ENCODE measurements at regions of chr4 and their contacts with region 1.

Region 1: DNA sequence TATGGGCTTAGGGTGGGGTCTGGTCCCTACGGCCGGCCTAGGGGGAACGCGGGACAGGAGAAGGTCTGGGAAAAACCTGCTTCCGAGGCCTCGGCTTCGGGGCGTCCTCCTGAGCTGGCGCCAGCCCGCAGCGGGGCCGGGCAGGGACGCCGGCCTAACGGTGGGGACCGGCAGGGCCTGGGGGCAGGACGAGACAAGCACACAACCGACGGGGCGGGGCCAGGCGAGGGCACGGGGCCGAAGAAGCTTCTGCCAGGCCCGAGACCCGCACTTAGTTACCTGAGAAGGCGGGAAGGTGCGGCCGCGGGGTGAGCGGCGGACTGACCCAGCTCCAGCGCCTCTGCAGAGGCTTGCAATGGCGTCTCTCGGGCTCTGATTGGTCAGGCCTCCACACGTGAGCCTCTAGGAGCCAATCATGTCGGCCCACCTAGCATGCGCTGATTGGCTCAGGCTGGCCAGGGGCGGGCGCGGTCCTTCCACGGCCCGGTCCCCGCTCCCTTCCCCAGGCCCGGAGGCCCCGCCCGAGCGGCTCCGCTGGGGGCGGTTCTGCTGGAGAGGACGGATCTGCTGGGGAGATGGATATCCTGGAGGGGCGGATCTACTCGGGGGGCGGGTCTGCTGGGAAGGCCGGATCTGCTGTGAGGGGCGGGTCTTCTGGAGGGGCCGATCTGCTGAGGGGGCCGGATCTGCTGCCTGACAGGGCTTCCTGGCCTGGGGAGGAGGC is 44.3 kb downstream of the CPLX1 start:
- DNase-seq: peak; percentile 97 to 99 (median 98)
- ATAC-seq: peak; percentile 92
- H3K4me3 ChIP-seq: peak overlapping the region; percentile 76 to 97
- H3K4me3 Mint-ChIP-seq: peak overlapping the region; percentile 92
- H3K27ac ChIP-seq: peak overlapping the region; percentile 94 to 95
- H3K27ac Mint-ChIP-seq: peak overlapping the region; percentile 95
- H3K4me1 ChIP-seq: peaks cover 46% of the 10 kb centered on the region
- H3K4me1 Mint-ChIP-seq: peaks cover 52% of the 10 kb centered on the region
- H3K27me3 ChIP-seq: peaks cover 0 to 17% of the 10 kb centered on the region in 2 experiments
- H3K27me3 Mint-ChIP-seq: peaks cover 21% of the 10 kb centered on the region
- CTCF ChIP-seq: no peak

Region 2: DNA sequence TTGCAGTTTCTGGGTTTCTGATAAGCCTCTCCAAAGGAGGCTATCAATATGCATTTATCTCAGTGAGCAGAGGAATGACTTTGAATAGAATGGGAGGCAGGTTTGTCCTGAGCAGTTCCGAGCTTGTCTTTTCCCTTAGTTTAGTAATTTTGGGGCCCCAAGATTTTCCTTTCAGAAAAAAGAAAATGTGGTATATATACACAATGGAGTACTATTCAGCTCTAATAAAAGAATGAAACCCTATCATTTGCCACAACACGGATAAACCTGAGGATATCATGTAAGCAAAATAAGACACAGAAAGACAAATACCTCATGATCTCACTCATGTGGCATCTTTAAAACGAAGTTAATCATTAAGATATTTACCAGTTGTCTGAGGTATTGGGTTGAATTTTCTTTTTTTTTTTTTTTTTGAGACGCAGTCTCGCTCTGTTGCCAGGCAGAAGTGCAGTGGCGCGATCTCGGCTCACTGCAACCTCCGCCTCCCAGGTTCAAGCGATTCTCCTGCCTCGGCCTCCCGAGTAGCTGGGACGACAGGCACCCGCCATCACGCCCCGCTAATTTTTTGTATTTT is 283.2 kb before region 1 on chr4:
- CTCF ChIA-PET with region 1: no interaction called
- POLR2A ChIA-PET with region 1: no interaction called
- intact Hi-C with region 1: loop called in 1 of 2 experiments (anchors 1 kb)
- DNase-seq: peak in 4 of 9 experiments; percentile 0 to 48 (median 40)
- ATAC-seq: peak; percentile 54
- H3K4me3 ChIP-seq: peak overlapping the region; percentile 85 to 90
- H3K4me3 Mint-ChIP-seq: peak overlapping the region; percentile 92
- H3K27ac ChIP-seq: peak overlapping the region; percentile 92 to 93
- H3K27ac Mint-ChIP-seq: peak overlapping the region; percentile 96
- H3K4me1 ChIP-seq: peaks cover 22% of the 10 kb centered on the region
- H3K4me1 Mint-ChIP-seq: peaks cover 42% of the 10 kb centered on the region
- H3K27me3 ChIP-seq: no peaks in the 10 kb centered on the region
- H3K27me3 Mint-ChIP-seq: no peaks in the 10 kb centered on the region
- CTCF ChIP-seq: no peak

Region 3: GRCh38 chr4:705278-706082 is 76.2 kb before region 1 on chr4 and contains the start of gene PCGF3:
- CTCF ChIA-PET with region 1: no interaction called
- POLR2A ChIA-PET with region 1: no interaction called
- intact Hi-C with region 1: loop called (anchors 1 to 2 kb)
- DNase-seq: peak; percentile 92 to 97 (median 95)
- ATAC-seq: peak; percentile 98
- H3K4me3 ChIP-seq: peak within 1 kb of the TSS; percentile 75 to 89
- H3K4me3 Mint-ChIP-seq: peak within 1 kb of the TSS; percentile 82
- H3K27ac ChIP-seq: peak within 1 kb of the TSS; percentile 68 to 75
- H3K27ac Mint-ChIP-seq: peak within 1 kb of the TSS; percentile 60
- H3K4me1 ChIP-seq: peaks cover 24% of the 10 kb centered on the region
- H3K4me1 Mint-ChIP-seq: peaks cover 28% of the 10 kb centered on the region
- H3K27me3 ChIP-seq: no peaks in the 10 kb centered on the region
- H3K27me3 Mint-ChIP-seq: no peaks in the 10 kb centered on the region
- CTCF ChIP-seq: no peak
- total RNA-seq, gene PCGF3: 39.1 to 39.5 TPM

Region 4: GRCh38 chr4:973431-974397 is 192.1 kb after region 1 on chr4 and contains the start of gene DGKQ:
- CTCF ChIA-PET with region 1: no interaction called
- POLR2A ChIA-PET with region 1: no interaction called
- intact Hi-C with region 1: loop called in 1 of 2 experiments (anchors 5 kb)
- DNase-seq: peak; percentile 83 to 95 (median 89)
- ATAC-seq: peak; percentile 82
- H3K4me3 ChIP-seq: peak within 1 kb of the TSS; percentile 74 to 77
- H3K4me3 Mint-ChIP-seq: peak within 1 kb of the TSS; percentile 62
- H3K27ac ChIP-seq: peak within 1 kb of the TSS; percentile 56 to 85
- H3K27ac Mint-ChIP-seq: peak within 1 kb of the TSS; percentile 37
- H3K4me1 ChIP-seq: peaks cover 32% of the 10 kb centered on the region
- H3K4me1 Mint-ChIP-seq: peaks cover 17% of the 10 kb centered on the region
- H3K27me3 ChIP-seq: no peaks in the 10 kb centered on the region
- H3K27me3 Mint-ChIP-seq: no peaks in the 10 kb centered on the region
- CTCF ChIP-seq: no peak
- total RNA-seq, gene DGKQ: 28.2 to 29.7 TPM

Region 5: GRCh38 chr4:1289207-1290164 is 507.8 kb after region 1 on chr4 and contains the start of gene MAEA:
- CTCF ChIA-PET with region 1: no interaction called
- POLR2A ChIA-PET with region 1: no interaction called
- intact Hi-C with region 1: loop called in 1 of 2 experiments (anchors 5 kb)
- DNase-seq: peak; percentile 94 to 98 (median 96)
- ATAC-seq: peak; percentile 97
- H3K4me3 ChIP-seq: peak within 1 kb of the TSS; percentile 57 to 92
- H3K4me3 Mint-ChIP-seq: peak within 1 kb of the TSS; percentile 92
- H3K27ac ChIP-seq: peak within 1 kb of the TSS; percentile 74 to 80
- H3K27ac Mint-ChIP-seq: peak within 1 kb of the TSS; percentile 91
- H3K4me1 ChIP-seq: peaks cover 38% of the 10 kb centered on the region
- H3K4me1 Mint-ChIP-seq: peaks cover 42% of the 10 kb centered on the region
- H3K27me3 ChIP-seq: no peaks in the 10 kb centered on the region
- H3K27me3 Mint-ChIP-seq: no peaks in the 10 kb centered on the region
- CTCF ChIP-seq: no peak
- total RNA-seq, gene MAEA: 74.6 to 77.6 TPM